Sigmoid colon (tissue), 7 donors: ENCODE measurements at regions of chr11 and their contacts with region 1.

Region 1: GRCh38 chr11:119381181-119381988 is at the start of gene USP2:
- DNase-seq: peak; percentile 98
- H3K4me3 ChIP-seq: peak within 1 kb of the TSS; percentile 32 to 47 (median 40)
- H3K27ac ChIP-seq: peak within 1 kb of the TSS; percentile 20 to 79 (median 62)
- H3K4me1 ChIP-seq: peaks cover 0 to 22% (median 15%) of the 10 kb centered on the region in 4 donors
- H3K27me3 ChIP-seq: no peaks in the 10 kb centered on the region
- CTCF ChIP-seq: peak; percentile 76 to 91 (median 88)
- EP300 ChIP-seq: peak in 3 of 4 donors; percentile 62 to 92 (median 82)
- POLR2A ChIP-seq: peak in 1 of 2 donors; percentile 41
- total RNA-seq, gene USP2: 0.71 to 1.9 (median 1.5) TPM

Region 2: DNA sequence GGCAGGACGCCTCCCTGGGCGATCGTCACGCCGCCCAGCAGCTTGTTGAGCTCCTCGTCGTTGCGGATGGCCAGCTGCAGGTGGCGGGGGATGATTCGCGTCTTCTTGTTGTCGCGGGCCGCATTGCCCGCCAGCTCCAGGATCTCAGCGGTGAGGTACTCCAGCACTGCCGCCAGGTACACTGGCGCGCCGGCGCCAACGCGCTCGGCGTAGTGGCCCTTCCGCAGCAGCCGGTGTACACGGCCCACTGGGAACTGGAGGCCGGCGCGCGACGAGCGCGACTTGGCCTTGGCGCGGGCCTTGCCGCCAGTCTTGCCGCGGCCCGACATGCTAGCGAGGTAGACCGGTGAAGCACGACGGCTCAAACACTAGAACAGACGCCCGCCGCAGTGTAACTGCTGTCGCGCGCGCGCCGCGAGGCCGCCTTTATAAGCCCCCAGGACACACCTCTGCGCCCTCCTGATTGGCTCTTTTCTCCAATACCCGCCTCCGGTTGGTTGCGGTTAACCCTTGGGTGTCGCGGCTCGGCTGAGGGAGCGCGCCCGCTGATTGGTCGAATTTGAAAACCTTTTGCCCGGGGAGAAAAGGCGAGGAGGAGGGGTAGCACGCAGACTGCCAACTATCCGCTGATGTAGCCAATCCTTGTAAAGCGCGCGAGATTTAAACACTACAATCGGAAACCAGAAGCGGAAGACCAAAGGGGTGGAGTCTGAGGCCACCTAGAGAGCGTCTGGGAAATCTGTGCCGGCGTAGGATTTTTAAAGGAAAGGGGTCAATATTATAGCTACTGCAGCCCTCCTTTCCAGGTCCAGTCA is 286.1 kb before region 1 on chr11:
- intact Hi-C with region 1: no loop called
- DNase-seq: peak; percentile 100
- H3K4me3 ChIP-seq: peak overlapping the region; percentile 71 to 96 (median 86)
- H3K27ac ChIP-seq: peak overlapping the region; percentile 97 to 99 (median 98)
- H3K4me1 ChIP-seq: peaks cover 0 to 40% (median 25%) of the 10 kb centered on the region in 4 donors
- H3K27me3 ChIP-seq: no peaks in the 10 kb centered on the region
- CTCF ChIP-seq: peak in 2 of 4 experiments; percentile 4 to 36
- EP300 ChIP-seq: no peak
- POLR2A ChIP-seq: peak; percentile 94 to 97

Region 3: GRCh38 chr11:119338318-119338907 is 43.0 kb before region 1 on chr11:
- intact Hi-C with region 1: loop called (anchors 5 kb)
- DNase-seq: peak; percentile 88
- H3K4me3 ChIP-seq: peak overlapping the region in 2 of 4 donors; percentile 63 to 73
- H3K27ac ChIP-seq: peak overlapping the region; percentile 80 to 92 (median 84)
- H3K4me1 ChIP-seq: peaks cover 0 to 70% (median 62%) of the 10 kb centered on the region in 4 donors
- H3K27me3 ChIP-seq: peaks cover 0 to 19% (median 12%) of the 10 kb centered on the region in 3 donors
- CTCF ChIP-seq: peak; percentile 74 to 83 (median 78)
- EP300 ChIP-seq: no peak
- POLR2A ChIP-seq: no peak

Region 4: DNA sequence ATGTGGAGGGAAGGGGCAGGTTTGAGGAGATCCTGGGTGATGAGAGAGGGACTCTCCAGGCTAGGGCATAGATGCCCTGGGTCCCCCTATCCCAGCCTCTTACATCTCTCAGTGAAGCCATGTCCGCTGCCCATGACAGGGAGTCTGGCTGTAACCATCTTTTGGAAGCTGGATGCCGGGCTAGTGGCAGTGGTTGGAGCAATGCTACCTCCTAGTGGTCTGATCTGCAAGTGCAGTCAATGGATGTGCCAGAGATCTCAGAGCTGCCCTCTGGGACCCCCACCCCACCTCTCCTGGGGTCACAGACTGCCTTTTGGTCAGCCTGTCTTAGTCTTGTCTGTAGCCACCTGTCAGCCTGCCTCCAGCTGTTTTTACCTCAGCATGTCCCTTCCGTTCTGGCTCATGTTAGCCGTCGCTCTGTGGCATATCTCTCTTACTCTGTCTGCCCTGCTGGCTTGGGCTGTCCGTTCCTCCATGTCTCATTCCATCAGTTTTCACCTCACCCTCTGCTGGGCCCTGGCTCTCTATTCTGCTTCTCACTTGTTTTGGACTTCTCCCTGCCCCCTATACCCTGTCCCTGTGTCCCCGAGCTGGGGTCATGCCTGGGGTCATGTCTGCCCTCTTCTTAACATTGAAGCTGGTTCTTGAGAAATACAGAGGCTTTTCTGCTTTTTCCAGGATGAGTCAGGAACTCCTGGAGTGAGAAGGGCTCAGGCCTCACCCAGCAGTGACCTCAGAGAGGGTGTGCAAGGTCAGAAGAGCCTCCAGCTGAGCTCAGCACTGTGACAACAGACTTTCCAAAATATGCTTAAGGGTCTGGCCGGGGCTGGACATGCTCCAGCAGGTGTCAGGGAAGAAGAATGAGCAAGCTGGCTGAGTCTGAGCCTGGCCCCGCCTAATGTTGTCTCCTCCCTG is 93.6 kb after region 1 on chr11:
- intact Hi-C with region 1: loop called (anchors 2 kb)
- DNase-seq: peak; percentile 80
- H3K4me3 ChIP-seq: no peak overlapping the region
- H3K27ac ChIP-seq: peak overlapping the region in 3 of 4 donors; percentile 19 to 63 (median 44)
- H3K4me1 ChIP-seq: peaks cover 0 to 19% (median 13%) of the 10 kb centered on the region in 4 donors
- H3K27me3 ChIP-seq: no peaks in the 10 kb centered on the region
- CTCF ChIP-seq: peak; percentile 69 to 95 (median 84)
- EP300 ChIP-seq: no peak
- POLR2A ChIP-seq: no peak